ENCODE measurements at regions of chr1 and their contacts with region 1.

Region 1: GRCh38 chr1:192104869-192105268 is 53.4 kb upstream of the RGS18 start:
- DNase-seq: peak; percentile 96
- H3K4me3 ChIP-seq: no peak overlapping the region
- H3K27ac ChIP-seq: peak overlapping the region; percentile 100
- H3K4me1 ChIP-seq: peaks cover 23% of the 10 kb centered on the region
- H3K27me3 ChIP-seq: no peaks in the 10 kb centered on the region
- CTCF ChIP-seq: no peak
- POLR2A ChIP-seq: peak; percentile 73

Region 2: DNA sequence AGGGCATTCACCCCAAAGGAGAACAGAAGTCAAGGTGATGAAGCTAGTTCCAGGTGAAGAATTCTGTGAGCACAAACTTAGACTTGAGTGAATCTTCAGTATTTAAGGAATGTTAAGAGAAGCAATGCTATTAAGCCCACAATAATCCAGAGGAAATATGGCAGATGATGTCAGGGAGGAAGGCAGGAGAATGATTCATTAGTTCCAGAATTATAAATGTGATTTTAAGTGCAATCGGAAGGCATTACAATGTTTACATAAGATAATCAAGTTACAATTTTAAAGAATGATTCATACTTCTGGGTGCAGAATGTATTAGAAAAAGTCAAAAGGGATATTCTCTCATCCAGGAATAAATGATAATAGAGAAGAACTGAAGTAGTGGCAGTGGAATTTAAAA is 1082.0 kb before region 1 on chr1:
- CTCF ChIA-PET with region 1: no interaction called
- POLR2A ChIA-PET with region 1: no interaction called
- dilution Hi-C with region 1: no loop called
- intact Hi-C with region 1: loop called (anchors 2 kb)
- DNase-seq: peak; percentile 91
- H3K4me3 ChIP-seq: no peak overlapping the region
- H3K27ac ChIP-seq: peak overlapping the region; percentile 80
- H3K4me1 ChIP-seq: peaks cover 28% of the 10 kb centered on the region
- H3K27me3 ChIP-seq: no peaks in the 10 kb centered on the region
- CTCF ChIP-seq: no peak
- POLR2A ChIP-seq: peak; percentile 32

Region 3: DNA sequence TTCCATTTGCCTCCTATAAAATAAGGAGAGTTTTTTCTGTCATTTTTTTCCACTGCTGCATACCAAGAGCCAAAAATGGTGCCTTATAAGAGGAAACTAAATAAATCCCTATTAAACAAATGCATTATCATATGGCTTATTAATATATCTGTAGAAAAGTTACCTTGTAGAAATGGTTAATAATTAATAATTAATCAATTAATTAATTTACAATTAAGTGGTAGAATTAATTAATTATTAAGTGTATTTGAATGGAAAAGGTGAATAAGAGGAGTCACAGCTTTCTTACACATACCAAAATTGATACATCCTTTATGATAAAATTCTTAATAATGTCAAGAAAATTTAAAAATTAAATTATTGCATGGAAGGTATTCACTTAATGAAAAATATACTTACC is 17.8 kb after region 1 on chr1:
- CTCF ChIA-PET with region 1: interaction called, 6 read pairs
- POLR2A ChIA-PET with region 1: no interaction called
- dilution Hi-C with region 1: no loop called
- intact Hi-C with region 1: loop called (anchors 1 kb)
- DNase-seq: no peak
- H3K4me3 ChIP-seq: no peak overlapping the region
- H3K27ac ChIP-seq: no peak overlapping the region
- H3K4me1 ChIP-seq: peaks cover 12% of the 10 kb centered on the region
- H3K27me3 ChIP-seq: no peaks in the 10 kb centered on the region
- CTCF ChIP-seq: no peak
- POLR2A ChIP-seq: no peak

Region 4: DNA sequence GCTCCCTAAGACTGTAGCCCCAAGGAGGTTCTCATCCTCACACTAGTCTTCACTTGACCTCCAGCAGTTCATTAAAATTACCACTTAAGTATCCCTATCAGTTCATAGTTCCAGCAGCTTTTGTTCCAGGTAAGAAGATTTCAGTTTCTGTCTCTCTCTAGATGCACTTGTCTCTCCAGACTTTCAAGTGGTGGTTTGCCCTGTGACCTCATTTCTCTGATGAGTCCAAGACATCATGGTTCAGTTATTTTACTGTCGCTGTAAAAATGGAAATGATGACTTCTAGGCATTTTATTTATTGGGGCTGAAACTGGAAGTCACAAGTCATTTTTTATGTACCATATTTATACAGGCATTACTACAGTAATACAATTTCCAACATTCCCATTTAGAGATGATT is 35.5 kb after region 1 on chr1:
- CTCF ChIA-PET with region 1: no interaction called
- POLR2A ChIA-PET with region 1: no interaction called
- dilution Hi-C with region 1: no loop called
- intact Hi-C with region 1: no loop called
- DNase-seq: no peak
- H3K4me3 ChIP-seq: no peak overlapping the region
- H3K27ac ChIP-seq: no peak overlapping the region
- H3K4me1 ChIP-seq: no peaks in the 10 kb centered on the region
- H3K27me3 ChIP-seq: no peaks in the 10 kb centered on the region
- CTCF ChIP-seq: no peak
- POLR2A ChIP-seq: no peak

Region 5: GRCh38 chr1:192167911-192168700 is 63.2 kb after region 1 on chr1:
- CTCF ChIA-PET with region 1: interaction called, 8 read pairs
- POLR2A ChIA-PET with region 1: no interaction called
- dilution Hi-C with region 1: no loop called
- intact Hi-C with region 1: loop called (anchors 1 kb)
- DNase-seq: peak; percentile 69
- H3K4me3 ChIP-seq: no peak overlapping the region
- H3K27ac ChIP-seq: peak overlapping the region; percentile 98
- H3K4me1 ChIP-seq: peaks cover 37% of the 10 kb centered on the region
- H3K27me3 ChIP-seq: no peaks in the 10 kb centered on the region
- CTCF ChIP-seq: no peak
- POLR2A ChIP-seq: no peak

Region 6: GRCh38 chr1:192311281-192311680 is 206.4 kb after region 1 on chr1:
- CTCF ChIA-PET with region 1: interaction called, 5 read pairs
- POLR2A ChIA-PET with region 1: no interaction called
- dilution Hi-C with region 1: no loop called
- intact Hi-C with region 1: loop called (anchors 2 kb)
- DNase-seq: peak; percentile 84
- H3K4me3 ChIP-seq: no peak overlapping the region
- H3K27ac ChIP-seq: no peak overlapping the region
- H3K4me1 ChIP-seq: no peaks in the 10 kb centered on the region
- H3K27me3 ChIP-seq: no peaks in the 10 kb centered on the region
- CTCF ChIP-seq: peak; percentile 50 to 55
- POLR2A ChIP-seq: no peak

Measured in endothelial cell of umbilical vein (primary cell).